ENCODE measurements at regions of chr18 and their contacts with region 1.

Region 1: GRCh38 chr18:46660955-46661749 is 4.1 kb upstream of the LOXHD1 start:
- DNase-seq: peak; percentile 19
- H3K4me3 ChIP-seq: no peak overlapping the region
- H3K27ac ChIP-seq: no peak overlapping the region
- H3K4me1 ChIP-seq: no peaks in the 10 kb centered on the region
- H3K27me3 ChIP-seq: peaks cover 0 to 3% of the 10 kb centered on the region in 2 experiments
- CTCF ChIP-seq: no peak
- POLR2A ChIP-seq: no peak

Region 2: DNA sequence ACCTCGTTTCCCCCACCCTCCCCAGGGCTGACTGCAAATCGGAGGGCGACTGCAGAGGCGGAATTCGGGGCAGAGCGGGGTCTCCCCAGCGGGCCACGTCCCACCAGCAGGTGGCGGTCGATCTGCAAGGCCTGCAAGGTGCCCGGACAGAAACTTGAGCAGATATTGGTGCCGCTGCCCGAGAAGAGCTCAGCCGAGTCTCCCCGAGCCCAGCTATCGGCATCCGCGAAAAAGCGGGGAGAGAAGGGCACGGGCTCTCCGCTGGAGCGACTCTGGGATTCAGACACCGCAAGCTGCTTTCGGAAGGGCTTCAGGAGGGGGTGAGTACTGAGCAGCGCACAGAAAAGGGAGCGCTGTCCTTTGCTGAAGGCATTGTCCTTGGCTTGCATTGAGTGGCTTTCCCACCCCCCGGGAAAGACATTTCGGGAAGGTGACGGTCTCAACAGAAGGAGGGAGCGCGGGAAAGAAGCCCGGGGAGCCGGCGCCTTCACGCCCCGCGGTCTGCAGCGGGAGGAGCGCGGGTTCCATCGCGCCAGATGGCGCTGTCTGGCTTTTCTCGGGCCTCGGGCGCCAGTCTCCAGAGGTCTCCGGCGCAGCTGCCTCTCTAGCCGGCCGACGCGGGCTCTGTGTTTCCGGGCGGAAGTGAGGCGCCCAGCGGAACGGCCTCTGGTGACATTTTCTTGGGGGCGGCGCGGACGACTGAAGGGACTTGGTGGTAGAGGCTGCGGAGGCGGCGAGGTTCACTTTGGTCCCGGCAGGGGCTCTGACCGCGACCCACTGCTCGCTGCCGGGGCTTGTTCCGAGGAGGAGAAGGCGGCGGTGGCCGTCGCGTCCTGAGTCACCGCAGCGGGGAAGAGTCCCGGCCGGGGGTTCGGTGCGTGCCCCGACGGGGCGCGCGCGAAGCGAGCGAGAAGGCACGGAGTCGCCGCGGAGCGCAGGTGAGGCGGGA is 487.5 kb before region 1 on chr18:
- CTCF ChIA-PET with region 1: interaction called, 212 read pairs
- POLR2A ChIA-PET with region 1: interaction called, 7 read pairs
- dilution Hi-C with region 1: no loop called
- intact Hi-C with region 1: loop called (anchors 1 kb)
- DNase-seq: peak; percentile 90
- H3K4me3 ChIP-seq: peak overlapping the region; percentile 76 to 89 (median 84)
- H3K27ac ChIP-seq: peak overlapping the region; percentile 78
- H3K4me1 ChIP-seq: peaks cover 15% of the 10 kb centered on the region
- H3K27me3 ChIP-seq: no peaks in the 10 kb centered on the region
- CTCF ChIP-seq: peak; percentile 84 to 97
- POLR2A ChIP-seq: peak; percentile 75

Region 3: DNA sequence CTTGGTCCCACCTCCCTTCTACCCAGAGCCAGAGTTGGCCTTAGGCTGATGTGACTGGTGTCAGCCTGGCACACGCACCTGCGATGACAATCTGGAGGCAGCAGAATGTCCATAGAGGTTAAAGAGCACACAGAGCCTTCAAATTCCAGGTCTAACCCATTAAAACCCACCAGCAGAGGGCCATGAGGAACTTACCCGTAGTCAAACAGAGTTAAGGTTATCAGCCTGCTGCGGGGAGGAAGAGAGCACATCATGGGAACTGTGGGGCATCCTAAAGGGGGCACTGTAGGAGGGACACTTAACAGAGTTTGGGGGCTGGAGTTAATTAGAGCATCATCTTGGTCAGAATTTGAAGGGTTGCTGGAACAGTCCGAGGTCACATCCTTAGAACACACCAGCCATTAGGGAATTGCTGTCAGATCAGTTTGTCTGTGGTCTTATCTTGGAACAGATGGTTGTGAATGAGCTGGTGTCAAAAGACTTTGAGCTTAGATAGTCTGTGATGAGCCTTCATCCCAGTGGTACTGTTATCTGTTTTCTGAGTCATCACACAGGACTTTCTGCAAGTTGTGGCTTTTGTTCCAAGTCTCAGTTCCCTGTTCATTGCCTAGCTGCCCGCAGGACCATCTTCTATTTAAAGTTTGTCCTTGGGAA is 252.7 kb before region 1 on chr18:
- CTCF ChIA-PET with region 1: interaction called, 4 read pairs
- POLR2A ChIA-PET with region 1: no interaction called
- dilution Hi-C with region 1: no loop called
- intact Hi-C with region 1: loop called (anchors 5 kb)
- DNase-seq: no peak
- H3K4me3 ChIP-seq: no peak overlapping the region
- H3K27ac ChIP-seq: no peak overlapping the region
- H3K4me1 ChIP-seq: no peaks in the 10 kb centered on the region
- H3K27me3 ChIP-seq: no peaks in the 10 kb centered on the region
- CTCF ChIP-seq: no peak
- POLR2A ChIP-seq: no peak

Region 4: GRCh38 chr18:46574000-46574742 is 87.0 kb before region 1 on chr18:
- CTCF ChIA-PET with region 1: no interaction called
- POLR2A ChIA-PET with region 1: no interaction called
- dilution Hi-C with region 1: no loop called
- intact Hi-C with region 1: no loop called
- DNase-seq: no peak
- H3K4me3 ChIP-seq: no peak overlapping the region
- H3K27ac ChIP-seq: no peak overlapping the region
- H3K4me1 ChIP-seq: no peaks in the 10 kb centered on the region
- H3K27me3 ChIP-seq: no peaks in the 10 kb centered on the region
- CTCF ChIP-seq: no peak
- POLR2A ChIP-seq: no peak

Region 5: DNA sequence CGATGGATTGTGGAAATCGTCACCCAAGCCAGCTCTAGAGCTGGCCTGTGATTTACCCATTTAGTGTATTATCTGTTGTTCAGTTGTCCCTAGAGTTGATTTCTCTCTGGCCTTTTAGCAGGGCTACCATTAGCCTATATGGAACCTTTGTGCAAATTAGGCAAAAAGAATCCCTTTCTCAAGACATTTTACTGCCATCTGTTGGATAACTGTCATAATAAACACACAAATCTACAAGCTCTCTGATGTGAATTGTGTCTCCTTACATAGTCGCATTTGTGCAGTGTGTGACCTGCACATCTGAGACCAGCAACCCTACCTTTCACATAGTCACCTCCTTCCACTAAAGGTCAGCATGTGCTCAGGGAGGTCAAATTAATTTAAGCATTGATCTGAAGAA is 38.2 kb before region 1 on chr18:
- CTCF ChIA-PET with region 1: interaction called, 18 read pairs
- POLR2A ChIA-PET with region 1: no interaction called
- dilution Hi-C with region 1: no loop called
- intact Hi-C with region 1: no loop called
- DNase-seq: no peak
- H3K4me3 ChIP-seq: no peak overlapping the region
- H3K27ac ChIP-seq: no peak overlapping the region
- H3K4me1 ChIP-seq: peaks cover 7% of the 10 kb centered on the region
- H3K27me3 ChIP-seq: no peaks in the 10 kb centered on the region
- CTCF ChIP-seq: no peak
- POLR2A ChIP-seq: no peak

Region 6: DNA sequence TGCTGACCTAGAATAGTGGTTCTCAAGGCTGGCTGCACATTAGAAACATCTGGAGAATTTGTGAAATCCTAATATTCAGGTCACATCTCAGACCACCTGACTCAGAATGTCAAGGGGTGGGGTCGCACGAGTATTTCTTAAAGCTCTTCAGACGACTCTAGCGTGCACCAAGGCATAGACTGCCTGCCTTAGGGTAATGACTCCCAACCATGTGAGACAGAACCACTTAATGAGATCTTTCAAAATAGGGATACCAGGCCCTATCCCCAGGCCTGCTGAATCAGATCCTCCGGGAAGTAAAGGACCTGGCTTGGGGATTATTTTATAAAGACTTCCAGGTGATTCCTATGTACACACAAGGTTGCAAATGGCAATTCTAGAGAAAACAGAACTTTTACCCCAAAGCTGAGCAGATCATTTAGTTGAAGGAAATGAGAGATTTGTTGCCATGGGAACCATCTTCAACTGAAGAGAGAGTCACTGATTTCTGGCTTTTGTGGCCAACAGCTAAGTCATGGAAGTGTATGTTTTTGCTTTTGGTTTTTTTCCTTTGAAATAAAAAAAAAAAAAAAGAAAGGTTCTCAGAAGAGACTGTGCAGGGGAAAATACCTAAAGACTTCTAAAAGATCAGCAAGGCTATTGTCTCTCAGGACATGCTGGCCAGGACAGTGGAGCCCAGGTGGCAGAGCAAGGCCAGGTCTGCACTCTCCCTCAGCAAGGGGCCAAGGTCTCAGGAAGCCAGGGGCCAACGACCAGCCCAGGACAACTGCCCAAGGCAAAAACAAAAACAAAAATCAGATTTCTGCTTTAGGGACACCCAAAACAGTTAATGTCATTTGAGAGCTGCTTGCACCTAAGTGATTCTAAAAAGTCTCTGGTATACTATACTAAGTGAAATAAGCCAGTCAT is 11.2 kb after region 1 on chr18:
- CTCF ChIA-PET with region 1: interaction called, 18 read pairs
- POLR2A ChIA-PET with region 1: no interaction called
- dilution Hi-C with region 1: no loop called
- intact Hi-C with region 1: no loop called
- DNase-seq: no peak
- H3K4me3 ChIP-seq: no peak overlapping the region
- H3K27ac ChIP-seq: no peak overlapping the region
- H3K4me1 ChIP-seq: peaks cover 8% of the 10 kb centered on the region
- H3K27me3 ChIP-seq: no peaks in the 10 kb centered on the region
- CTCF ChIP-seq: no peak
- POLR2A ChIP-seq: no peak